Posterior vena cava (tissue), 2 donors: ENCODE measurements at regions of chr17 and their contacts with region 1.

Region 1: DNA sequence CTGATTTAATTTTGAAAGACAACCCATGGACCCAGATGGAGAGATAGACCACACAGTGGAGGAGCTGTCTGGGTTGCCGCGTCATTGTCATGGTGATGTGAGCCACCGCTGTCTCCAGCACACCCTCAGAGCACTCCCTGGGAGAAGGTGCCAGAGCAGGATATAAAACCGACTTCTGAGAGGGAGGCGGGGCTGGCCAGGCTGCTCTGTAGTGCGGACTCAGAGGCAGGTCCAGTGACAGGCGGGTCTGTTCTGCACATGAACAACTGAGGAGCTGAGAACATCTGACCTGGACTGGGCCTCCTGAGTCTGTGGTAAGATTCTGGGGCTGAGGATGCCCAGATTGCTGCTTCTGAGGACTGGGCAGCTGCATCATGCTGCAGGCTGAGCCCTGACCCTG is 216.4 kb upstream of the NLRP1 start:
- DNase-seq: no peak

Region 2: DNA sequence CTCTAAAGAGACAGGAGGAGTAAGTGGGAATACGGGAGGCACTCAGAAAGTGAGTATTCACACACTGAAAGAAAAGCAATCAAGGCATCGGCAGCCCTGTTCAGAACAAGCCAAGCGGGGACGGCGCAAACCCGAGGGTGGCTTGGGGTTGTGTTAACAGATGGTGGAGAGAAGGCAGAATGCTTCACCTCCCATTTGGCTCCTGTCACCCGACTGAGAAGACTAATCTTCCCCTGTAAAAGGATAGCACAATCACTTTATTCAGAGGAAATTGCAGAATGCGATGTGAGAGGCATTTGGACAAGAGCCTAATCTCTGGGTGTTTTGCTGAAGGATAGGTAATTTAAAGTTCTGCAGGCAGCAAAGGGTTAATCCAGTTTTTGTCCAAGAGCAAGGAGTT is 150.2 kb after region 1 on chr17:
- intact Hi-C with region 1: loop called in 1 of 2 experiments (anchors 10 kb)
- DNase-seq: no peak